Endothelial cell of umbilical vein (primary cell): ENCODE measurements at regions of chr2 and their contacts with region 1.

Region 1: DNA sequence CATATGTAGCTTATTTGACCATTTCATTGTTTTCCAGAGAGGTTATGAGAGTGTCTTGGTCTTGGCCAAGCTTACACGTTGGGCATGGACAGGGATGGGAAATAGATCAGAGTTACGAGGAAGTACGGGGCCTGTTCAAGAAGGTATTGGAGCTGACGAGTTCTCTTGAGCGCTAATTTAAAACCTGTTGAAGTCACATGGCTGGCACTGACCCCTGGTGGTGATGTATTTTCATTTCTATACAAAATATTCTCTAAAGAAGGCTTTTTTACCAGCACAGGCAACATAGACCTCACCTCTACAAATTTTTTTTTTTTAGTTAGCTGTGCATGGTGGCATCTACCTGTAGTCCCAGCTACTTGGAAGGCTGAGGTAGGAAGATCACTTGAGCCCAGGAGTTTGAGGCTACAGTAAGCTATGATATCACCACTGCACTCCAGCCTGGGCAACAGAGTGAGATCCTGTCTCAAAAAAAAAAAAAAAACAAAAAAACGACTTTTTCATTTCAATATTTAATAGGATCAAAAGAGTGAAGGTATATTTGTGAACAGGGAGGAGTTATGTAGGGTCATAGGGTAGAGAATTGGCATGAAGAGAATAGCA is 19.6 kb downstream of the UGP2 start:
- DNase-seq: peak; percentile 79
- H3K4me3 ChIP-seq: no peak overlapping the region
- H3K27ac ChIP-seq: no peak overlapping the region
- H3K4me1 ChIP-seq: no peaks in the 10 kb centered on the region
- H3K27me3 ChIP-seq: no peaks in the 10 kb centered on the region
- CTCF ChIP-seq: peak; percentile 42 to 50
- POLR2A ChIP-seq: no peak

Region 2: GRCh38 chr2:63588385-63589147 is 272.8 kb before region 1 on chr2 and contains the starts of genes MDH1 and WDPCP:
- CTCF ChIA-PET with region 1: interaction called, 12 read pairs
- POLR2A ChIA-PET with region 1: no interaction called
- dilution Hi-C with region 1: no loop called
- intact Hi-C with region 1: loop called (anchors 5 kb)
- DNase-seq: peak; percentile 99
- H3K4me3 ChIP-seq: peak within 1 kb of the TSS; percentile 62 to 89 (median 85)
- H3K27ac ChIP-seq: peak within 1 kb of the TSS; percentile 67
- H3K4me1 ChIP-seq: peaks cover 18% of the 10 kb centered on the region
- H3K27me3 ChIP-seq: no peaks in the 10 kb centered on the region
- CTCF ChIP-seq: no peak
- POLR2A ChIP-seq: peak; percentile 84
- total RNA-seq, gene MDH1: 98.8 and 107 TPM in 2 replicates
- total RNA-seq, gene WDPCP: 6.9 and 8.8 TPM in 2 replicates

Region 3: GRCh38 chr2:63698825-63699548 is 162.3 kb before region 1 on chr2:
- CTCF ChIA-PET with region 1: interaction called, 178 read pairs
- POLR2A ChIA-PET with region 1: no interaction called
- dilution Hi-C with region 1: no loop called
- intact Hi-C with region 1: no loop called
- DNase-seq: peak; percentile 93
- H3K4me3 ChIP-seq: no peak overlapping the region
- H3K27ac ChIP-seq: peak overlapping the region; percentile 48
- H3K4me1 ChIP-seq: peaks cover 16% of the 10 kb centered on the region
- H3K27me3 ChIP-seq: no peaks in the 10 kb centered on the region
- CTCF ChIP-seq: peak; percentile 44 to 50
- POLR2A ChIP-seq: peak; percentile 72

Region 4: GRCh38 chr2:63841254-63842022 is 19.9 kb before region 1 on chr2 and contains the start of gene UGP2:
- CTCF ChIA-PET with region 1: interaction called, 44 read pairs
- POLR2A ChIA-PET with region 1: no interaction called
- dilution Hi-C with region 1: no loop called
- intact Hi-C with region 1: loop called (anchors 1 kb)
- DNase-seq: peak; percentile 92
- H3K4me3 ChIP-seq: peak within 1 kb of the TSS; percentile 91 to 96 (median 95)
- H3K27ac ChIP-seq: peak within 1 kb of the TSS; percentile 81
- H3K4me1 ChIP-seq: peaks cover 16% of the 10 kb centered on the region
- H3K27me3 ChIP-seq: no peaks in the 10 kb centered on the region
- CTCF ChIP-seq: peak in 1 of 2 donors; percentile 26
- POLR2A ChIP-seq: peak; percentile 84
- total RNA-seq, gene UGP2: 57.7 and 63.9 TPM in 2 replicates

Region 5: DNA sequence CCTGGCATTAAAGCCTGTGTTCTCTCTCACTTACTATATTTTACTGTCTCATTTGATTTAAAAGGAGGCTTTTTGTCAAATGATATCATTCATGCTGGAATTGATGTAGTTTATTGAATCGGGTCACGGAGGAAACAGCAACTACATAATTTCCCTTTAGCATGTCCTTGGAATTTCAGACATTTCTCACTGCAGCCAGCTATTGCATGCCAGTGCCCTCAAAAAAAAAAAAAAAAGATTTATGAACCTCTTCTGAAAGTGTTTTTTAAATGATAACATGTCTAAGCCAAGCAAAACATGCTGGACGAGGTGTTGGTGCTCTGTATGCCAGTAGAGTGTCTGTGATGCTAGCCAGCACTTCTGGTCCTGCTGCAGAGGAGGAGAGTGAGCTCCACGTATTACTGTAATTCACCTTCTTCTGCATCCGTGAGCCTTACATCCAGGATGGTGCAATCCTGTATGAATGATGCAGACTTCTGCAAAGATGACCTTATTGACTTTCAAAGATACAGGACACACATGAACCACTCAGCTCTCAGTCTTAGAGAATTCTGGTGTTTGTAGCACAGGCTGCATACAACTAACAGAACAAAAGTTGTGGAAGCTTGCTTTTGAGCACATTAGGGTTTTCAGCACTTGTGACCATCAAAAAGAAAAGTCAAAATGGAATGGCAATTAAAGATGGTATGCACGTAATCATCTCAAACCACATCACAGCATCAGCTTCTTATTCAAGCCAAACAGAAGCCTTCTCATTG is 11.4 kb after region 1 on chr2:
- CTCF ChIA-PET with region 1: interaction called, 12 read pairs
- POLR2A ChIA-PET with region 1: no interaction called
- dilution Hi-C with region 1: no loop called
- intact Hi-C with region 1: no loop called
- DNase-seq: peak; percentile 74
- H3K4me3 ChIP-seq: no peak overlapping the region
- H3K27ac ChIP-seq: no peak overlapping the region
- H3K4me1 ChIP-seq: no peaks in the 10 kb centered on the region
- H3K27me3 ChIP-seq: no peaks in the 10 kb centered on the region
- CTCF ChIP-seq: no peak
- POLR2A ChIP-seq: no peak